ENCODE measurements at regions of chr11 and their contacts with region 1.

Region 1: DNA sequence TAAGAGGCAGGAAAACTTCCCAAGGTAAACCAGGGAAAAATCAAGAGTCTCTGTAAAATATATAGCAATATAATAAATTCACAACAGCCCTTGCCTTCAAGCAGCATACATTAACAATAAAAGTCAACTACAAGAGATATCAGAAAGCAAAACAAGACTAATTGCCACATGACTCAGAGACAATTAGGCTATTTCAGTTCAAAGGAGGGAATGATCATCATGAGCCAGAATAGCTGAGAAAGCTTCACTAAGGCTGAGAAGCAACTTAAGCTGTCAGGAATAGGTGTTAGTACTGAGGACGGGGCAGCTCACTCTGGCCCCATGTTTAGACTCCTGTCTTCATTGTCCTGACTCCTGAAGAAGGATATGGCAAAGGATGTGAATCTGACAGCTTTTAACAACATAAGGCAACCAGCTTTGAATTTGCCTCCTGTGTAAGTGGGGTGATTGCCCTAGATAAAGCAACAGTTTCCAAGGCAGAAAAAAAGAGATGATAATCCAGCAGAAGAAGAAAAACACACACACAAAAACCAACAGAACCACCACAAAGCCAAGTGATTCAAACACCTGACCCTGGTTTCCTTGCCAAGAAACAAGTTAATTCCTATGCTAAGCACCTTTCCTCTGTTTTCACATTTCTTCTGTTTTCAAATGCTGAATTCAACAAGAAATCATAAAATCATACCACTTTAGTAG is 60.8 kb downstream of the SIK3 start:
- DNase-seq: peak in 1 of 35 experiments; percentile 39
- ATAC-seq: peak; percentile 44 to 63 (median 62)
- H3K4me3 ChIP-seq: no peak overlapping the region
- H3K4me3 Mint-ChIP-seq: peak overlapping the region; percentile 13 to 49 (median 25)
- H3K27ac ChIP-seq: peak overlapping the region; percentile 52
- H3K27ac Mint-ChIP-seq: peak overlapping the region; percentile 84 to 88
- H3K4me1 ChIP-seq: peaks cover 12 to 22% of the 10 kb centered on the region in 2 experiments
- H3K4me1 Mint-ChIP-seq: peaks cover 69 to 76% (median 70%) of the 10 kb centered on the region in 3 donors
- H3K27me3 ChIP-seq: no peaks in the 10 kb centered on the region
- H3K27me3 Mint-ChIP-seq: no peaks in the 10 kb centered on the region

Region 2: DNA sequence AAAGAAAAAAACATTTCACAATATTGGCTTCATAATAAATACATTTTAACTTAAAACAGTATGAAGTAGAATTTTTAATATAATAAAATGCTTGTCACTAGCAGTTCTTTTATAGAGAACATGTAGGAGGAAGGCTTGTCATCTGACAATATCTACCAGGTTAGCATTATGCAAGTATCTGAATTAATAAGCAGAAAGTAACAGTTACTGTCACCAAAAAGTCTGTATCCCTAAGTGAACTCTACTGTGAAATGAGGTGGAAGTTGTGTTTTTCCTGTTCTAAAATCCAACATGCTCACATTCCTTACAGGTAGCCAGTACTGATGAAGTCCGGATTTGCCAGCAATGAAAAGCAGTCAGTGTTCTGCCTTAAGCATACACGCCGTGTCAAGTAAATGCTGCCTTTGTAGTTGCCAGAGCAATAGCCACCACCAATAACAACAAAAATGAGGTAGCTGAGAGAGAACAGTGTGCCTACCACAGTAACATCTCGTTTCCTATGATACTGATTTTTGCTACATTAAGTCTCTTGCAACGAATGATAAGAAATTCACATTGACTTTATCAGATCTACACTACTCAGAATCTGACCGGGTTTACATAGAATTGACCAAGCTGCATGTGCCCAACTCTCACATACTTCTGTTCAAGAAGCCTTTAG is 34.7 kb before region 1 on chr11:
- CTCF ChIA-PET with region 1: no interaction called
- POLR2A ChIA-PET with region 1: interaction called in 1 of 2 experiments, 13 read pairs
- DNase-seq: peak in 2 of 35 experiments; percentile 14 to 28
- ATAC-seq: peak; percentile 37 to 70 (median 53)
- H3K4me3 ChIP-seq: no peak overlapping the region
- H3K4me3 Mint-ChIP-seq: no peak overlapping the region
- H3K27ac ChIP-seq: no peak overlapping the region
- H3K27ac Mint-ChIP-seq: peak overlapping the region; percentile 45 to 60
- H3K4me1 ChIP-seq: peaks cover 6 to 9% of the 10 kb centered on the region in 2 experiments
- H3K4me1 Mint-ChIP-seq: peaks cover 72 to 79% (median 75%) of the 10 kb centered on the region in 3 donors
- H3K27me3 ChIP-seq: no peaks in the 10 kb centered on the region
- H3K27me3 Mint-ChIP-seq: no peaks in the 10 kb centered on the region

Measured in T-cell (primary cell).